ENCODE measurements at regions of chr7 and their contacts with region 1.

Region 1: GRCh38 chr7:70027867-70028266 is 429.6 kb downstream of the AUTS2 start:
- DNase-seq: no peak
- ATAC-seq: no peak

Region 2: GRCh38 chr7:69932034-69932628 is 95.7 kb before region 1 on chr7:
- intact Hi-C with region 1: loop called (anchors 5 kb)
- DNase-seq: no peak
- ATAC-seq: no peak

Region 3: GRCh38 chr7:69962186-69963065 is 65.4 kb before region 1 on chr7:
- intact Hi-C with region 1: loop called (anchors 5 kb)
- DNase-seq: no peak
- ATAC-seq: peak; percentile 84